K562 (cell line): ENCODE measurements at regions of chr3 and their contacts with region 1.

Region 1: DNA sequence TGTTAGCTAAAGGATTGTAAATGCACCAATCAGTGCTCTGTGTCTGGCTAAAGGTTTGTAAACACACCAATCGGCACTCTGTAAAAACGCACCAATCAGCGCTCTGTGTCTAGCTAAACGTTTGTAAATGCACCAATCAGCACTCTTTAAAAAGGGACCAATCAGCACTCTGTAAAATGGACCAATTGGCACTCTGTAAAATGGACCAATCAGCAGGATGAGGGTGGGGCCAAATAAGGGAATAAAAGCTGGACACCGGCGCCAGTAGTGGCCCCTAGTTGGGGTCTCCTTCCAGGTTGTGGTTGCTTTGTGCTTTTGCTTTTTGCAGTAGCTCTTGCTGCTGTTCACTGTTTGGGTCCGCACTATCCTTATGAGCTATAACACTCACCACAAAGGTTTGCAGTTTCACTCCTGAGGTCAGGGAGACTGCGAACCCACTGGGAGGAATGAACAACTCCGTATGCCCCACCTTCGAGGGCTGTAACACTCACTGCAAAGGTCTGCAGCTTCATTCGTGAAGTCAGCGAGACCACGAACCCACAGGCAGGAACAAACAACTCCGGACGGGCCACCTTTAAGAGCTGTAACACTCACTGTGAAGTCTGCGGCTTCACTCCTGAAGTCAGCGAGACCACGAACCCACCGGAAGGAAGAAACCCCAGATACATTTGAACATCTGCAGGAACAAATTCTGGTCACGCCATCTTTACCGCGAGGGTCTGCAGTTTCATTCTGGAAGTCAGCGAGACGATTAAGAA is 1.1 kb upstream of the SUCLG2 start:
- DNase-seq: no peak
- ATAC-seq: no peak
- H3K4me3 ChIP-seq: no peak overlapping the region
- H3K27ac ChIP-seq: no peak overlapping the region
- H3K4me1 ChIP-seq: peaks cover 6 to 7% of the 10 kb centered on the region in 2 experiments; a peak in 3 of 5 replicates
- H3K27me3 ChIP-seq: peaks cover 0 to 3% of the 10 kb centered on the region in 2 experiments; a peak in 1 of 5 replicates
- CTCF ChIP-seq: no peak
- EP300 ChIP-seq: no peak
- POLR2A ChIP-seq: no peak
- RAD21 ChIP-seq: no peak

Region 2: DNA sequence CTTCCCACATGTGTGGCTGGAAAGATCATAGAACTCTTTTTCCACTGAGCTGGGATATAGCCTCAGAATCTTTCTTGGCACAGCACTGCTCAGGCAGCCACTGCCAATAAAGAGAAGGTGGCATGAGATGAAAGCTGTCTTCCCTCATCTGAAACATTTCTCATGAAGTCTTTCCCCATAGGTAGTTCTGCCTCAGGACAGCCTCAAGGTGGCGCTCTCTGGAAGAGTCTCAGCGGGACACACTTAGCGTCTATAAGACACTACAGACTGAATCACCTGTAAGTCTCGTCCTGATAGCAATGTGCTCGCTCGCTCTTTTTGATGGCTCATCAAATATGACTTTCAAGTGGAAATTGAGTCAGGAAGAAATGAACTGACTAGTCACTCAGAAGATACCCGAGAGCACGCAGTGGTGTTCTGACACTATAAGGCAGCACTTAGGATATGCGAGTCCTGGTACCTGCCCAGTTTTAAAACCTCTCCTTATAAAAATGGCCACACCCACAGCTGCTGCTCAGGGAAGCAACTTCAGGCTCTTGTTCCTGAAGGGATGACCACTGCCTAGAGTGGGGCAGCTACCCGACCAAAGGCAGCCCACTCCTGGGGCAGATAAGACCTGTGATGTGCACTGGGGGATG is 270.7 kb before region 1 on chr3:
- CTCF ChIA-PET with region 1: interaction called, 8 read pairs
- POLR2A ChIA-PET with region 1: no interaction called
- in situ Hi-C with region 1: no loop called
- intact Hi-C with region 1: loop called (anchors 2 kb)
- DNase-seq: peak; percentile 37 to 63 (median 38)
- ATAC-seq: peak; percentile 93
- H3K4me3 ChIP-seq: no peak overlapping the region
- H3K27ac ChIP-seq: no peak overlapping the region
- H3K4me1 ChIP-seq: no peaks in the 10 kb centered on the region; a peak in 1 of 5 replicates
- H3K27me3 ChIP-seq: no peaks in the 10 kb centered on the region
- CTCF ChIP-seq: peak; percentile 57 to 67 (median 60)
- EP300 ChIP-seq: no peak
- POLR2A ChIP-seq: no peak
- RAD21 ChIP-seq: peak; percentile 20 to 58; a peak in 2 of 4 replicates

Region 3: GRCh38 chr3:67593761-67594244 is 61.7 kb before region 1 on chr3:
- CTCF ChIA-PET with region 1: no interaction called
- POLR2A ChIA-PET with region 1: no interaction called
- in situ Hi-C with region 1: no loop called
- intact Hi-C with region 1: no loop called
- DNase-seq: peak in 2 of 4 experiments; percentile 8 to 13
- ATAC-seq: peak; percentile 81
- H3K4me3 ChIP-seq: no peak overlapping the region
- H3K27ac ChIP-seq: no peak overlapping the region
- H3K4me1 ChIP-seq: no peaks in the 10 kb centered on the region
- H3K27me3 ChIP-seq: no peaks in the 10 kb centered on the region
- CTCF ChIP-seq: 0 out of 6 replicates have a peak, but pooled peaks of 2 of the 3 experiments have one; percentile 9 to 23
- EP300 ChIP-seq: no peak
- POLR2A ChIP-seq: no peak
- RAD21 ChIP-seq: 0 out of 4 replicates have a peak, but pooled peaks of 1 of the 2 experiments have one; percentile 14